CD8-positive, alpha-beta T cell (primary cell): ENCODE measurements at regions of chr1 and their contacts with region 1.

Region 1: DNA sequence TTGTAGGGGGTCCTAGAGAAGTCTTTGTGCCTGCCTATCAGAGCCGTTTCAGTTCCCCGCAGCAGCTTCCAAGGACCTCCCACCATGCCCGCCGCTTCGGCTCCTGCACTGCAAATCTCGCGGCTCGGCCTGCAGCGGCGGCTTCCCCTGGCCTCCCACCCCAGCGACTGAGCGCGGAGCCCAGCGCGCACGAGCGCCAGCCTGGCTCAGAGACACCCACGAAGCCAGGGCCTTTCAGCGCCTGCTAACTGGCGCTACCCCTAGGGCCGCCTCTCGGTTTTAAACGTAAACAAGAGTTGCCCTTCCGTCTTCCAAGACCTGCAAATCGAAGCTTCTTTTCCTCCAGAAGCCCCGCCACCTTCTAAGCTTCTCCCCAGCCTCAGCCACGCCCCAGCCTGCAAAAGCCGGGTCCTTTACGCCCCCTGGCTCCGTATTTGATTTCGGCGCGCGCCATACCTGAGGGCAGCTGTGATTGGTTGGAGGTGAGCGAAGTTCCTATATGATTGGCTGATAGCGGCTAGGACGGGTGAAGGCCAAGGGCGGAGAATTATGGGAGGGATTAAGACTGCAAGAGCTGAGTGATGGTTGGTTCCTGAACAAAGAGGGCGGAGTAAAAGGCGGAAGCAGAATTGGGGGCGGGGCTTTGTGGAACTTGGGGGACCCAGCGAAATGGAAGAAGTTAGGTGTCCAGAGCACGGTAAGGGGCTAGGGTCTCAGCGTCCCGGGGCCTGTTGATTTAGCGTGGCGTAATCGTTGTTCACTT is at the start of gene TTF2:
- DNase-seq: peak; percentile 88 to 99 (median 93)
- ATAC-seq: peak; percentile 87
- H3K4me3 ChIP-seq: peak within 1 kb of the TSS; percentile 75
- H3K4me3 Mint-ChIP-seq: no peak within 1 kb of the TSS
- H3K27ac ChIP-seq: peak within 1 kb of the TSS; percentile 70 to 92
- H3K27ac Mint-ChIP-seq: no peak within 1 kb of the TSS
- H3K4me1 ChIP-seq: peaks cover 22% of the 10 kb centered on the region
- H3K4me1 Mint-ChIP-seq: peaks cover 39% of the 10 kb centered on the region
- H3K27me3 ChIP-seq: no peaks in the 10 kb centered on the region
- H3K27me3 Mint-ChIP-seq: no peaks in the 10 kb centered on the region
- CTCF ChIP-seq: no peak
- total RNA-seq, gene TTF2: 31.5 to 33.2 TPM

Region 2: DNA sequence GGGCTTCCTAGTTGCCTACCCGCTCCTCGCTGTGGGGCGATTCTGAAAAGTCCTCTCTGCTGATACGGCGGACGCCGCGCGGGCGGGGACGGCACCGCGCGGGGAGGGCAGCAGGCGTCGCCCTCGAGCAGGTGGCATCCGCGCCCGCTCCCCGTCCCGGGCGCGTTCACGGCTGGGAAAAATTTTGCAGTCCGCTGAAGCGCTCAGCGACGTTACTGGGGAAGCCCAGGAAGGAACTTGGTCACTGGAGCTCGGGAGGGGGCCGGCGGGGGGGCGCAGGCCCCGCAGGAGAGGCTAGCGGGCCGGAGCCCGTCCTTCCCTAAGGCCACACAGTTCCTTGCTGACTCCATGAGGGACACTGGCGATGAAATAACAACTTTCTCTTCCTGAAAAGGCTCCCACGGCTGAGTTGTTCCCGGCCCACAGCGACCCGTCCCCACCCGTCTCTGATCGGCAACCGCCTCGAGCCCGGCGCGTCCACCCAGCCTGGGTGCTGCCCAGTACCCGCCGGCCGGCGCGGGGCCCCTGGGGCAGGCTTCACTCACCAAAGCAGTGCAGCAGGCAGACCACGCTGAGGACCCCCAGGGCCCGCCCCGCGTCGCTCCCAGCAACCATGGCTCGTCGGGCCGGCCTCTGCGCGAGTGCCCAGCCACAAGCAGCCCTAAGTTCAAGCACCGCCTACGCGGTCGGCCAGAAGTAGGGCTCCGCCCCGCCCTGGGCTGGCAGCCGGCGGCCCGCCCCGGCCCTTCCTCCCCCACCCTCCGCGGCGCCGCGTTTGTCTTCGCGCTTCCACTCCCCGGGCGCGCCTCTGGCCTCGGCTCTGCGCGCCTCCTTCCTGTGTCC is 489.3 kb before region 1 on chr1 and contains the start of gene CD58:
- CTCF ChIA-PET with region 1: interaction called, 4 read pairs
- POLR2A ChIA-PET with region 1: no interaction called
- intact Hi-C with region 1: loop called (anchors 1 to 2 kb)
- DNase-seq: peak; percentile 53 to 89 (median 76)
- ATAC-seq: peak; percentile 75
- H3K4me3 ChIP-seq: peak within 1 kb of the TSS; percentile 88 to 95
- H3K4me3 Mint-ChIP-seq: peak within 1 kb of the TSS; percentile 92
- H3K27ac ChIP-seq: peak within 1 kb of the TSS; percentile 62 to 89
- H3K27ac Mint-ChIP-seq: peak within 1 kb of the TSS; percentile 92
- H3K4me1 ChIP-seq: peaks cover 3% of the 10 kb centered on the region
- H3K4me1 Mint-ChIP-seq: peaks cover 38% of the 10 kb centered on the region
- H3K27me3 ChIP-seq: no peaks in the 10 kb centered on the region
- H3K27me3 Mint-ChIP-seq: no peaks in the 10 kb centered on the region
- CTCF ChIP-seq: peak; percentile 73
- total RNA-seq, gene CD58: 5.4 to 6.6 TPM

Region 3: GRCh38 chr1:116763787-116764465 is 295.9 kb before region 1 on chr1:
- CTCF ChIA-PET with region 1: interaction called, 3 read pairs
- POLR2A ChIA-PET with region 1: interaction called, 14 read pairs
- intact Hi-C with region 1: no loop called
- DNase-seq: peak in 4 of 9 experiments; percentile 45 to 74 (median 58)
- ATAC-seq: peak; percentile 10
- H3K4me3 ChIP-seq: peak overlapping the region; percentile 18 to 22
- H3K4me3 Mint-ChIP-seq: peak overlapping the region; percentile 75
- H3K27ac ChIP-seq: peak overlapping the region; percentile 57 to 87
- H3K27ac Mint-ChIP-seq: peak overlapping the region; percentile 96
- H3K4me1 ChIP-seq: peaks cover 96% of the 10 kb centered on the region
- H3K4me1 Mint-ChIP-seq: peaks cover 96% of the 10 kb centered on the region
- H3K27me3 ChIP-seq: no peaks in the 10 kb centered on the region
- H3K27me3 Mint-ChIP-seq: no peaks in the 10 kb centered on the region
- CTCF ChIP-seq: peak; percentile 22

Region 4: GRCh38 chr1:116878804-116879477 is 180.9 kb before region 1 on chr1:
- CTCF ChIA-PET with region 1: interaction called, 5 read pairs
- POLR2A ChIA-PET with region 1: interaction called, 6 read pairs
- intact Hi-C with region 1: loop called in 1 of 2 experiments (anchors 5 kb)
- DNase-seq: peak in 3 of 9 experiments; percentile 16 to 22 (median 16)
- ATAC-seq: no peak
- H3K4me3 ChIP-seq: peak overlapping the region in 1 of 2 experiments; percentile 24
- H3K4me3 Mint-ChIP-seq: no peak overlapping the region
- H3K27ac ChIP-seq: no peak overlapping the region
- H3K27ac Mint-ChIP-seq: no peak overlapping the region
- H3K4me1 ChIP-seq: peaks cover 35% of the 10 kb centered on the region
- H3K4me1 Mint-ChIP-seq: peaks cover 13% of the 10 kb centered on the region
- H3K27me3 ChIP-seq: no peaks in the 10 kb centered on the region
- H3K27me3 Mint-ChIP-seq: no peaks in the 10 kb centered on the region
- CTCF ChIP-seq: no peak

Region 5: DNA sequence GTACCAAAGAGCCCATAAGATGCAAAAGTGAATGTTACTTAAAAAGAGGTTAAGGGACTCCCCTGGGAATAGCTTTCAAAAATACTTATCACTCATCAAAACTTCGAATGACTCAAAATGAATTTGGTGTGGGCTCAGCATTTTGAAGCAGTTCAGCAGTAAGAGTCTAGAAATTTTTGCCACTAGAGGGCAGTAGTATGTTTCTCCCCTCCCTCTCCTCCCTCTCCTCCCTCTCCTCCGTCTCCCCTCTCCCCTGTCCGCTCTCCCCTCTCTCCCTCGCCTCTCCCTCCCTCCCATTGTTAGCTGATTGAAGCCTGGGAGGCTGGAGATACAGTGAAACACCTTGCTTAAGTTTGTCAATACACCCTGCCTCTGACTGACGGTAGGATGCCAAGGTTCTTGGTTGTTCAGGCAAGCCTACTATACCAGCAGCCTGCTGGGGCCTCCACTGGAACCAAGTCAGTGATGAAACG is 475.2 kb after region 1 on chr1:
- CTCF ChIA-PET with region 1: no interaction called
- POLR2A ChIA-PET with region 1: no interaction called
- intact Hi-C with region 1: loop called in 1 of 2 experiments (anchors 10 kb)
- DNase-seq: peak in 8 of 9 experiments; percentile 8 to 79 (median 32)
- ATAC-seq: peak; percentile 89
- H3K4me3 ChIP-seq: no peak overlapping the region
- H3K4me3 Mint-ChIP-seq: no peak overlapping the region
- H3K27ac ChIP-seq: no peak overlapping the region
- H3K27ac Mint-ChIP-seq: no peak overlapping the region
- H3K4me1 ChIP-seq: peaks cover 13% of the 10 kb centered on the region
- H3K4me1 Mint-ChIP-seq: peaks cover 2% of the 10 kb centered on the region
- H3K27me3 ChIP-seq: no peaks in the 10 kb centered on the region
- H3K27me3 Mint-ChIP-seq: no peaks in the 10 kb centered on the region
- CTCF ChIP-seq: peak; percentile 61